ENCODE measurements at regions of chr1 and their contacts with region 1.

Region 1: GRCh38 chr1:150532868-150533302 is 16.3 kb upstream of the ADAMTSL4 start:
- DNase-seq: no peak
- ATAC-seq: no peak
- H3K4me3 ChIP-seq: no peak overlapping the region
- H3K27ac ChIP-seq: peak overlapping the region; percentile 62 to 85 (median 83)
- H3K4me1 ChIP-seq: peaks cover 38% of the 10 kb centered on the region
- H3K27me3 ChIP-seq: no peaks in the 10 kb centered on the region
- CTCF ChIP-seq: no peak
- POLR2A ChIP-seq: no peak

Region 2: GRCh38 chr1:150473659-150474058 is 59.2 kb before region 1 on chr1:
- intact Hi-C with region 1: loop called (anchors 5 kb)
- DNase-seq: no peak
- ATAC-seq: no peak
- H3K4me3 ChIP-seq: no peak overlapping the region
- H3K27ac ChIP-seq: peak overlapping the region in 1 of 4 donors; percentile 13
- H3K4me1 ChIP-seq: peaks cover 8% of the 10 kb centered on the region
- H3K27me3 ChIP-seq: no peaks in the 10 kb centered on the region
- CTCF ChIP-seq: no peak
- POLR2A ChIP-seq: no peak

Region 3: GRCh38 chr1:150567717-150568593 is 35.1 kb after region 1 on chr1:
- intact Hi-C with region 1: no loop called
- DNase-seq: peak; percentile 94 to 98 (median 97)
- ATAC-seq: peak; percentile 91
- H3K4me3 ChIP-seq: no peak overlapping the region
- H3K27ac ChIP-seq: peak overlapping the region; percentile 97 to 100 (median 100)
- H3K4me1 ChIP-seq: peaks cover 95% of the 10 kb centered on the region
- H3K27me3 ChIP-seq: no peaks in the 10 kb centered on the region
- CTCF ChIP-seq: peak in 2 of 7 experiments; percentile 14 to 19
- POLR2A ChIP-seq: peak in 2 of 3 donors; percentile 60 to 65

Measured in body of pancreas (tissue), 4 donors.